Ascending aorta (tissue), 2 donors: ENCODE measurements at regions of chr5 and their contacts with region 1.

Region 1: DNA sequence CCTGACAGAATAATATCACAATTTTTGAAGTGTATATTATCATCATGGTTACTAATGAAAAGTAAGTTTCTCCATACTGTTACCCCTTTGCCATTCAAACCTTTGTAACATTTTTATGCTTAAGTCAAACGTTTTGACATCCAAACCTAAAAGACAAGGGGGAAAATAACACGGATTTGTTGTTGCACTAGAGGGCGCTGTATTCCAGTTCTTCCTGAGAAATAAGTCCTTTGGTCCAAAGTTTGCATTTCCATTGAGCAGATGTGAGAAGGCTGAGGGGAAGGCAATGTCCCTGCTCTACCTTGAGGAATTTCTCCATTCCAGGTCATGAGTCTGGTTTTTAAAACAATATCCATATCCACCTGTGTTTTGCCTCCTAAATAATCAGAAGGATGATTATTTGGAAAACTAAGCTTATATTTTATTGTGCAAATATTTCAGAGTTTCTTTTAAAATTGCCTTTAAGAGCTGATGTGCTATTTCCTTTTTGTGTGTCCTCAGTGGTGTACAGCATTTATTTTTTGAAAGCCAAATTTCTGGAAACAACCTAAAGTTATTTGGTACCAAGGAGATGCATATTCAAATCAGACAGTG is 9.7 kb downstream of the LECT2 start:
- DNase-seq: peak in 1 of 2 donors; percentile 72
- H3K4me3 ChIP-seq: no peak overlapping the region
- H3K27ac ChIP-seq: no peak overlapping the region
- H3K4me1 ChIP-seq: no peaks in the 10 kb centered on the region
- H3K27me3 ChIP-seq: no peaks in the 10 kb centered on the region
- CTCF ChIP-seq: peak; percentile 67 to 83 (median 73)

Region 2: DNA sequence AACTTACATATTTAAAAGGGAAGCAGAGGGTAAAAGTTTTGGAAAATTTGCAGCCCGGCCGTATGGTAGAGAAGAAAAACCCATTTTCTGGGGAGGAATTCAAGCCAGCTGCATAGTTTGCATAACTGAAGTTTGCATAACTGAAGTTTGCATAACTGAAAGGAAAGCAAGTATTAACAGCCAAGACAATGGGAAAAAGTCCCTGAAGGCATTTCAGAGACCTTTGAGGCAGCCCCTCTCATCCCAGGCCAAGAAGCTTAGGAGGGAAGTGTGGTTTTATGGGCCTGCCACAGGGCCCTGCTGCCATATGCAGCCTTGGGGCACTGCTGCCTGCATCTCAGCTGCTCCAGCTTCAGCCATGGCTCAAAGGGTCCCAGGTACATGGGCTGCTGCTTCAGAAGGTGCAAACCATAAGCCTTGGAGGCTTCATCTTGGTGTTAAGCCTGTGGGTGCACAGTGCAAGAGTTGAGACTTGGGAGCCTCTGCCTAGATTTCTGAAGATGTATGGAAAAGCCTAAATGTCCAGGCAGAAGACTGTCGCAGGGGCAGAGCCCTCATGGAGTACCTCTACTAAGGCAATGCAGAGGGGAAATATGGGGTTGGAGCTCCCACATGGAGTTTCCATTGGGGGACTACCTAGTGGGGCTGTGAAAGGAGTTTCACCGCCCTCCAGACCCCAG is 329.3 kb before region 1 on chr5:
- intact Hi-C with region 1: no loop called
- DNase-seq: no peak
- H3K4me3 ChIP-seq: no peak overlapping the region
- H3K27ac ChIP-seq: no peak overlapping the region
- H3K4me1 ChIP-seq: no peaks in the 10 kb centered on the region
- H3K27me3 ChIP-seq: no peaks in the 10 kb centered on the region
- CTCF ChIP-seq: no peak

Region 3: DNA sequence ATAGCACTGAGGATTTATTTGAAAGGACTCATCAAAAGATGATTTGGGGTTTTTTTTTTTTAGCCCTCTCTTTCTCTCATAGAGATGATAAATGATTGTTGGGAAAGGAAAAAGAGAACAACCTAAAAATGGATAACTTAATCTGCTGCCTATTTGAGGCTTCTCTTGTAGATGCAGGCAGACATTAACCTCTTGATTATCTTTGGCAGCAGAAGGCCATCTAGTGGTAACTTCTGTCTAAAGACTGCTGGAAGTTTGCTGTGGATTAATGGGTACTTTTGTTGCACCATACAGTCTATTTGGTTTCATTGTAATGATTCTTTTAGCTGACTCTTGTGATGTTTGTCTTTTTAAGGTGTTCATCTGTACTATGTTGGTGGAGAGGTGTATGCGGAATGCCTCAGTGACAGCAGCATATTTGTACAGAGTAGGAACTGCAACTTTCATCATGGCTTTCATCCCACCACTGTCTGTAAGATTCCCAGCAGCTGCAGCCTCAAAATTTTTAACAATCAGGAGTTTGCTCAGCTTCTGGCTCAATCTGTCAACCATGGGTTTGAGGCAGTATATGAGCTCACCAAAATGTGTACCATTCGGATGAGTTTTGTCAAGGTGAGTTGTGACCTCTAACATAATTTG is 229.1 kb after region 1 on chr5:
- intact Hi-C with region 1: loop called (anchors 2 kb)
- DNase-seq: no peak
- H3K4me3 ChIP-seq: no peak overlapping the region
- H3K27ac ChIP-seq: no peak overlapping the region
- H3K4me1 ChIP-seq: no peaks in the 10 kb centered on the region
- H3K27me3 ChIP-seq: no peaks in the 10 kb centered on the region
- CTCF ChIP-seq: peak in 2 of 3 experiments; percentile 36 to 48